ENCODE measurements at regions of chr11 and their contacts with region 1.

Region 1: DNA sequence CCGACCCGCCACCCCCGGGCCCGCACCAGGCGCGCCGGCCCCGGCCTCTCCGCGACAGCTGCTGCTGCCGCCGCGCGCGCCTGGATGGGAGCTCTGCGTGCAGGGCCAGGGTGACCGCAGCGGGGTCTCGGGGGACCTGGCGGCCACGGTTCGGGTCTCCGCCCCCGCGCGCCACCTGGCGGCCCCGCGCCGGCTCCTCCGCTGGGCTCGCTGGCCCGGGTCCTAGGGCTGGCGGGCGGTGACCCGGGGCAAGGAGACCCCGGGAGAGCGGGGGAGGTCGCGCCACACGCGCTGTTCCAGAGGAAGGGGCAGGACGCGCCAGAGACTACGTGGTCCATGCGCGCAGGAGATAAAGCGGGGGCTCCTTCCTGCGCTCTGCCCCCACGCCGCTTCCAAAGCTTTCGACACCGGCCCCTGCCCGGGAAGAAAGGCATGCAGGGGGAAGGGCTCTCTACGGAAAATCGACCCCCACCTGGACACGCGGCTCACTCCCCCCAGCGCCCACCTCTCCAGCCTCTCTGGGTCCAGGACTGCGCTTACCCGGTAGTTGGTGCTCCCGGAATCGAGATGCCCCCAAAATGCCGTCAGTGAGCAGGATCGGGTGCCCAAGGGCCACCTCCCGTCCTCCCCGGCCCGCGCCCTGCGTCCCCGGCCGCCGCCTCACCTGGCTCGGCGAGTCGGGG is 475 bp downstream of the SHANK2 start:
- DNase-seq: peak in 1 of 2 experiments; percentile 86
- H3K4me3 ChIP-seq: peak overlapping the region; percentile 80 to 95 (median 84)
- H3K27ac ChIP-seq: peak overlapping the region; percentile 75
- H3K4me1 ChIP-seq: peaks cover 22 to 58% (median 47%) of the 10 kb centered on the region in 4 experiments
- H3K27me3 ChIP-seq: no peaks in the 10 kb centered on the region; a peak in 1 of 7 replicates
- CTCF ChIP-seq: peak; percentile 63 to 87 (median 66)
- EP300 ChIP-seq: no peak
- POLR2A ChIP-seq: no peak; a peak in 2 of 3 replicates
- RAD21 ChIP-seq: peak; percentile 51 to 82; a peak in 3 of 4 replicates

Region 2: DNA sequence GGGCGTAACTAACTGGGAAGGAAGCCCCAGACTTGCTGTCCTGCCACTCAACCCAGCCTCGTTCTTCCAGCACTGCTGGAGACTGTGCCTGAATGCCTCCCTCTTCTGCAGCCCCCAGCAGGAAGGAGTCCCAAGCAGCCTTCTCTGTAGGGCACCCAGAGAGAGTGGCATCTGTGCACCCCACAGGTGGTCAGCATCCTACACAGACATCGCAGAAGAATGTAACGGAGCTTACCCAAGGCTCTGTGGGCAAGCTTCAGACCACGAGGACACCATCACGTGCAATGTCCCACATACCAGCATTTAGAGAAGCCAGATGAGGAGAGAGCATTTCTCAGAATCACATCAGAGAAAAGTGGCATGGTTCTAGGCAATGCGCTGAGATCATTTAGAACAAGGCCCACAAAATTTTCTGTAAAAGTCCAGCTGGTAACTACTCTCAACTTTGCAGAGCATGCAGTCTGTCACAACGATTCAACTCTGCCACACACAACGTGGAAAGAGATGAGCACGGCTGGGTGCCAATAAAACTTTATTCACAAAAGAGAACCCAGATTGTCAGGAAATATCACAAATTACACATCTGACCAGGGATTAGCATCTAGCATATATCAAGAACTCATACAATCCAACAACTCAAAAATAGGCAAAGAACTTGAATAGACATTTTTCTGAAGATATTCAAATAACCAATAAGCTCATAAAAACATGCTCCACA is 33.0 kb before region 1 on chr11:
- CTCF ChIA-PET with region 1: interaction called, 3 read pairs
- POLR2A ChIA-PET with region 1: interaction called, 15 read pairs
- DNase-seq: no peak
- H3K4me3 ChIP-seq: no peak overlapping the region
- H3K27ac ChIP-seq: no peak overlapping the region
- H3K4me1 ChIP-seq: peaks cover 0 to 11% (median 4%) of the 10 kb centered on the region in 4 experiments; a peak in 5 of 7 replicates
- H3K27me3 ChIP-seq: no peaks in the 10 kb centered on the region
- CTCF ChIP-seq: no peak
- EP300 ChIP-seq: no peak
- POLR2A ChIP-seq: no peak
- RAD21 ChIP-seq: no peak

Region 3: DNA sequence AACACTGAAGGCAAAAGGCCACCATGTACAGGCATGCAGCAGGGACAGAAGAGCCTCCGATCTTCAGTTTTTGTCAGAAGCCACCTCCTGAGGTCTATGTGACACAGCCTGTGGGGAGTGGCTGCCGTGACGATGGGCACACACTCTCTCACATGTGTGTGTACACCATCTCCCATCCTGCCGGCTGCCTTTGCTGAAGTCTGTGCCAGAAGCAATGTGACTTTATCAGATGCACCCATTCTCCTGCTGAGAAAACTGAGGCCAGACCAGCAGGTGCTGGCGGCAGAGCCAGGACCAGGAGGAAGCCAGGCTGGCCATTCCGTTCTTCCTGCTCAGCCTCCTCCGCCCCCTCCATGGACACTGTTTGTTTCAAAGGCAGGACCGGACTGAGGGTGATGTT is 16.2 kb before region 1 on chr11:
- CTCF ChIA-PET with region 1: interaction called, 20 read pairs
- POLR2A ChIA-PET with region 1: interaction called, 23 read pairs
- DNase-seq: no peak
- H3K4me3 ChIP-seq: no peak overlapping the region
- H3K27ac ChIP-seq: no peak overlapping the region
- H3K4me1 ChIP-seq: peaks cover 0 to 6% (median 4%) of the 10 kb centered on the region in 4 experiments; a peak in 5 of 7 replicates
- H3K27me3 ChIP-seq: no peaks in the 10 kb centered on the region
- CTCF ChIP-seq: no peak
- EP300 ChIP-seq: no peak
- POLR2A ChIP-seq: no peak
- RAD21 ChIP-seq: no peak

Region 4: GRCh38 chr11:71266221-71266833 is 14.4 kb after region 1 on chr11:
- CTCF ChIA-PET with region 1: interaction called, 7 read pairs
- POLR2A ChIA-PET with region 1: interaction called, 13 read pairs
- DNase-seq: peak in 1 of 2 experiments; percentile 78
- H3K4me3 ChIP-seq: peak overlapping the region in 2 of 4 experiments; percentile 12 to 14; a peak in 2 of 8 replicates
- H3K27ac ChIP-seq: no peak overlapping the region
- H3K4me1 ChIP-seq: peaks cover 2 to 10% (median 5%) of the 10 kb centered on the region in 4 experiments
- H3K27me3 ChIP-seq: no peaks in the 10 kb centered on the region; a peak in 1 of 7 replicates
- CTCF ChIP-seq: peak in 1 of 3 experiments; percentile 16; a peak in 2 of 4 replicates
- EP300 ChIP-seq: no peak
- POLR2A ChIP-seq: peak in 1 of 2 experiments; percentile 20; a peak in 1 of 3 replicates
- RAD21 ChIP-seq: peak; percentile 20 to 42; a peak in 3 of 4 replicates